T-cell (primary cell): ENCODE measurements at regions of chr16 and their contacts with region 1.

Region 1: GRCh38 chr16:14119136-14119535 is 48.0 kb downstream of the MRTFB start:
- DNase-seq: no peak
- ATAC-seq: no peak
- H3K4me3 ChIP-seq: no peak overlapping the region
- H3K4me3 Mint-ChIP-seq: no peak overlapping the region
- H3K27ac ChIP-seq: no peak overlapping the region
- H3K27ac Mint-ChIP-seq: no peak overlapping the region
- H3K4me1 ChIP-seq: no peaks in the 10 kb centered on the region
- H3K4me1 Mint-ChIP-seq: peaks cover 14 to 36% (median 16%) of the 10 kb centered on the region in 3 donors
- H3K27me3 ChIP-seq: no peaks in the 10 kb centered on the region
- H3K27me3 Mint-ChIP-seq: no peaks in the 10 kb centered on the region

Region 2: DNA sequence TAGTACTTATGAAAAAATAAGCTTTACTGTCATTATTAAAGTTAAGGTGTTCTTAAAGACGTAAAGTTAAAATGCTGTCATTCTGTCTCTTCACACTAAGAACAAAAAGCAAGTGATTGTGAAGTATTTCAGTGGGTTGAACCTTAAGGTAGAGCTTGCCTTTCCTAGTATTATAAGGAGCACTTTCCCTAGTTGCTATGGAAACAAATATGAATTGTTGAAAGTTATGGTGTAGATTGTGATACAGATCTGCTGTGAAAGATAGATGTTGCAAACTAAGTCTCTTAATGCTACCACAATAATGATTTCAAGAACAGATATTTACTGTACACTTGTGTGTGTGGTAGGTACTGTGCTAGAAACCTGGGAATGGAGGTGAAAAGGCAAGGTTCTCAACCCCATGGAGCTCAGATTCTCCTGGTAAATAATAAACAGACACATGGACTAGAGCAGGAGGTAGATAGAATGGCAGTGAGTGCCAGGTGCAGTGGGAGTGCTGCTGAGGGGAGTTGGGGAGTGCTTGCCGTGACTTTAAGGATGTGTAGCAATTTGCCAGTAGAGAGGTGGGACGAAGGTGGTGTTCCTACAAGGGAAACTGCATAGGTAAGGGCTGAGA is 13.3 kb before region 1 on chr16:
- CTCF ChIA-PET with region 1: no interaction called
- POLR2A ChIA-PET with region 1: interaction called in 1 of 2 experiments, 11 read pairs
- DNase-seq: no peak
- ATAC-seq: no peak
- H3K4me3 ChIP-seq: no peak overlapping the region
- H3K4me3 Mint-ChIP-seq: no peak overlapping the region
- H3K27ac ChIP-seq: no peak overlapping the region
- H3K27ac Mint-ChIP-seq: no peak overlapping the region
- H3K4me1 ChIP-seq: peaks cover 0 to 2% of the 10 kb centered on the region in 2 experiments
- H3K4me1 Mint-ChIP-seq: peaks cover 63 to 85% (median 81%) of the 10 kb centered on the region in 3 donors
- H3K27me3 ChIP-seq: no peaks in the 10 kb centered on the region
- H3K27me3 Mint-ChIP-seq: no peaks in the 10 kb centered on the region

Region 3: GRCh38 chr16:14186007-14186794 is 67.1 kb after region 1 on chr16:
- CTCF ChIA-PET with region 1: no interaction called
- POLR2A ChIA-PET with region 1: no interaction called
- DNase-seq: peak in 2 of 35 experiments; percentile 10 to 34
- ATAC-seq: peak; percentile 47 to 93 (median 64)
- H3K4me3 ChIP-seq: peak overlapping the region in 1 of 2 donors; percentile 20
- H3K4me3 Mint-ChIP-seq: peak overlapping the region in 2 of 3 donors; percentile 55 to 79
- H3K27ac ChIP-seq: no peak overlapping the region
- H3K27ac Mint-ChIP-seq: peak overlapping the region; percentile 56 to 59
- H3K4me1 ChIP-seq: peaks cover 6 to 18% of the 10 kb centered on the region in 2 experiments
- H3K4me1 Mint-ChIP-seq: peaks cover 18 to 39% (median 27%) of the 10 kb centered on the region in 3 donors
- H3K27me3 ChIP-seq: no peaks in the 10 kb centered on the region
- H3K27me3 Mint-ChIP-seq: no peaks in the 10 kb centered on the region

Region 4: GRCh38 chr16:14202697-14203096 is 83.6 kb after region 1 on chr16:
- CTCF ChIA-PET with region 1: no interaction called
- POLR2A ChIA-PET with region 1: no interaction called
- DNase-seq: no peak
- ATAC-seq: peak in 1 of 4 experiments; percentile 51
- H3K4me3 ChIP-seq: no peak overlapping the region
- H3K4me3 Mint-ChIP-seq: peak overlapping the region in 1 of 3 donors; percentile 3
- H3K27ac ChIP-seq: no peak overlapping the region
- H3K27ac Mint-ChIP-seq: no peak overlapping the region
- H3K4me1 ChIP-seq: no peaks in the 10 kb centered on the region
- H3K4me1 Mint-ChIP-seq: peaks cover 2 to 11% (median 5%) of the 10 kb centered on the region in 3 donors
- H3K27me3 ChIP-seq: no peaks in the 10 kb centered on the region
- H3K27me3 Mint-ChIP-seq: no peaks in the 10 kb centered on the region

Region 5: DNA sequence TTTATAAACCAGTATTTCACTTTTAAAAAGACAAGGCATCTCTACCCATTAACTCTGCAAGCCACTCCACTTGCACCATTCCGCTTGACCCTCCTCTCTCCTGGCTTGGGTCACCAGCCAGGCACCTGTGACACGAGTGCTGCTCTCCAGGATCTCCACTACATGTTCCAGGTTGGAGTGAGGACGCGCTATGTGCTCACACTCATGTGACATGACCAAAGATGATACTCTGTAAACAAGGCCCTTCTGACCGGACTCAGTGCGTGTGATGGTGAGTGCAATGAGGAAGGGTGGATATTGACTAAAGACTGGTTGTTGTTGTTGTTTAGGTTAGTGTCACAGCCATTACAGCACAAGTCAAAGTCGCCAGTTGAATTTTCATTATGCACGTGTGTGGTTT is 144.6 kb after region 1 on chr16:
- CTCF ChIA-PET with region 1: no interaction called
- POLR2A ChIA-PET with region 1: no interaction called
- DNase-seq: no peak
- ATAC-seq: no peak
- H3K4me3 ChIP-seq: no peak overlapping the region
- H3K4me3 Mint-ChIP-seq: no peak overlapping the region
- H3K27ac ChIP-seq: no peak overlapping the region
- H3K27ac Mint-ChIP-seq: no peak overlapping the region
- H3K4me1 ChIP-seq: no peaks in the 10 kb centered on the region
- H3K4me1 Mint-ChIP-seq: no peaks in the 10 kb centered on the region
- H3K27me3 ChIP-seq: no peaks in the 10 kb centered on the region
- H3K27me3 Mint-ChIP-seq: no peaks in the 10 kb centered on the region